B cell (primary cell): ENCODE measurements at regions of chr16 and their contacts with region 1.

Region 1: DNA sequence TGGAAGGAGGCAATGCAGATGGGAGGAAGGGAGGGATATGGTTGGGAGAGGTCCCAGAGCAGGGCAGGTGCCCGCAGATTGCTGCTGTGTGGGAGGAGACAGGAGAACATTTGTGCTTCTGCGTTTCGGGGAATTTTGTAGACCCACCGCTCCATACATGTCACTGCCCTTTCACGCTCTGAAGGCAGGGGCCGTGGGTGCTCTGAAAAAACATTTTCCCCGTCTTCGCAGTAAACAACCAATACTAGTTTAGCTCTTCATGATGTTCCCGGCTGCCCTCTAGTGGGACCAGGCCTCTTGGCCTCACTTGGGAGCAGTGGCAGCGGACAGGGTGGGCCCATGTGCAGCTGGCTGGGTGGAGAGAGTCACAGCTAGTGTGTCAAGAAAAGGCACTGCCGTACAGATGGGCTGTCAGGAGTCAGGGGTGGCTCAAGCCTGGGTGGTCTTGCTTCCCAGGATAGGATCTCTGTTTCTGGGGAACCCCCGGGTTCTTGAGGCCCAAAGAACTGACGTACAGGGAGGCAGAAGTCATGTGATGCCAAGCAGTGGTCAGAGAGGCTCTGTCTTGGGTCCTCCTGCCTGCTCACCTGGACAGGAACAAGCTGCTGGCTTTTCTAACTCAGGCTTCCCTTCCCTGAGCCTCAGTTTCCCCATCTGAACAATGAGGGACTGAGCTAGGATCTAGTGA is 46.5 kb upstream of the CPNE2 start:
- DNase-seq: peak; percentile 84
- ATAC-seq: peak; percentile 48
- H3K4me3 ChIP-seq: peak overlapping the region in 2 of 5 experiments; percentile 25 to 38
- H3K4me3 Mint-ChIP-seq: peak overlapping the region; percentile 78
- H3K27ac ChIP-seq: peak overlapping the region; percentile 65 to 72
- H3K27ac Mint-ChIP-seq: peak overlapping the region; percentile 98
- H3K4me1 ChIP-seq: peaks cover 51 to 69% of the 10 kb centered on the region in 2 donors
- H3K4me1 Mint-ChIP-seq: peaks cover 68% of the 10 kb centered on the region
- H3K27me3 ChIP-seq: no peaks in the 10 kb centered on the region
- H3K27me3 Mint-ChIP-seq: no peaks in the 10 kb centered on the region
- CTCF ChIP-seq: peak; percentile 67

Region 2: GRCh38 chr16:56938422-56939156 is 107.2 kb before region 1 on chr16:
- CTCF ChIA-PET with region 1: interaction called, 14 read pairs
- POLR2A ChIA-PET with region 1: interaction called, 4 read pairs
- intact Hi-C with region 1: no loop called
- DNase-seq: no peak
- ATAC-seq: peak; percentile 22
- H3K4me3 ChIP-seq: no peak overlapping the region
- H3K4me3 Mint-ChIP-seq: peak overlapping the region; percentile 80
- H3K27ac ChIP-seq: peak overlapping the region in 1 of 2 donors; percentile 24
- H3K27ac Mint-ChIP-seq: peak overlapping the region; percentile 78
- H3K4me1 ChIP-seq: peaks cover 74 to 82% of the 10 kb centered on the region in 2 donors
- H3K4me1 Mint-ChIP-seq: peaks cover 79% of the 10 kb centered on the region
- H3K27me3 ChIP-seq: no peaks in the 10 kb centered on the region
- H3K27me3 Mint-ChIP-seq: no peaks in the 10 kb centered on the region
- CTCF ChIP-seq: no peak

Region 3: DNA sequence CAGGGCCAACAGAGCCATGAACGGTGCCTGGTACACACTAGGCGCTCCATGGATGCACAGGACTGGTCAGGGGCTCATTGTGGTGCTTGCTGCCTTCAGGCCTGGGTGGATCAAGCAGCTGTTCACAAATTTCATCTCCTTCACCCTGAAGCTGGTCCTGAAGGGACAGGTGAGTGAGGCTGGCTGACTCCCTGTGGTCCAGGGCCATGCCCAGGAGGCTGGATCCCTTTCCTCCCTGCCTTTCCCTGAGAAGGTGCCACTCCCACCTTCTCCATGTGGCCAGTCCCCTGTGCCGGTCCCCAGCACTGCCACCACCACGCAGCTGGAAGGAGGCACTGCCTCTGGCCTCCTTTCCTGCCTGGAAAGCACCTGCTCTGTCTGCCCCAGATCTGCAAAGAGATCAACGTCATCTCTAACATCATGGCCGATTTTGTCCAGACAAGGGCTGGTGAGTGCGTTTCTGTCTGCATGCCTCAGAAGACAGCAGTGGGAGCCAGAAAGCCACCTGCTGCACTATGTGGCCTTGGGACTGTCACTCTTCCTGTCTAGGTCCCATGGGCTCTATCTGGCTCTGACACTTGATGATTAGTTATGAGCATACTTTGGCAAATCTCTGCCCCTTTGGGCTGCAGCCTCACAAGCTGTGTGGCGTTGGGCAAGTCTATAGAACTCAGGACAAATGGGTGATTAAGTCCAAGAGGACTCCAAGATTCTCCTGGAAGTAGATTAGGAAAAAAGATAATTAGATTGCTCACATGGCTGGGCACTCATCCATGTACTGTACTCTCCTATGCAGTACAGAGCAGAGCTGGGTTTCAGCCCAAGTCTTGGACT is 74.7 kb before region 1 on chr16:
- CTCF ChIA-PET with region 1: interaction called, 213 read pairs
- POLR2A ChIA-PET with region 1: interaction called, 24 read pairs
- intact Hi-C with region 1: loop called (anchors 1 kb)
- DNase-seq: peak; percentile 87
- ATAC-seq: peak; percentile 92
- H3K4me3 ChIP-seq: no peak overlapping the region
- H3K4me3 Mint-ChIP-seq: peak overlapping the region; percentile 82
- H3K27ac ChIP-seq: peak overlapping the region; percentile 39 to 57
- H3K27ac Mint-ChIP-seq: peak overlapping the region; percentile 97
- H3K4me1 ChIP-seq: peaks cover 55 to 62% of the 10 kb centered on the region in 2 donors
- H3K4me1 Mint-ChIP-seq: peaks cover 60% of the 10 kb centered on the region
- H3K27me3 ChIP-seq: no peaks in the 10 kb centered on the region
- H3K27me3 Mint-ChIP-seq: no peaks in the 10 kb centered on the region
- CTCF ChIP-seq: no peak

Region 4: GRCh38 chr16:57000271-57001025 is 45.4 kb before region 1 on chr16:
- CTCF ChIA-PET with region 1: interaction called, 14 read pairs
- POLR2A ChIA-PET with region 1: interaction called, 6 read pairs
- intact Hi-C with region 1: loop called (anchors 2 kb)
- DNase-seq: peak; percentile 41
- ATAC-seq: peak; percentile 73
- H3K4me3 ChIP-seq: no peak overlapping the region
- H3K4me3 Mint-ChIP-seq: peak overlapping the region; percentile 71
- H3K27ac ChIP-seq: peak overlapping the region; percentile 77 to 83
- H3K27ac Mint-ChIP-seq: peak overlapping the region; percentile 94
- H3K4me1 ChIP-seq: peaks cover 52 to 63% of the 10 kb centered on the region in 2 donors
- H3K4me1 Mint-ChIP-seq: peaks cover 88% of the 10 kb centered on the region
- H3K27me3 ChIP-seq: no peaks in the 10 kb centered on the region
- H3K27me3 Mint-ChIP-seq: no peaks in the 10 kb centered on the region
- CTCF ChIP-seq: no peak

Region 5: DNA sequence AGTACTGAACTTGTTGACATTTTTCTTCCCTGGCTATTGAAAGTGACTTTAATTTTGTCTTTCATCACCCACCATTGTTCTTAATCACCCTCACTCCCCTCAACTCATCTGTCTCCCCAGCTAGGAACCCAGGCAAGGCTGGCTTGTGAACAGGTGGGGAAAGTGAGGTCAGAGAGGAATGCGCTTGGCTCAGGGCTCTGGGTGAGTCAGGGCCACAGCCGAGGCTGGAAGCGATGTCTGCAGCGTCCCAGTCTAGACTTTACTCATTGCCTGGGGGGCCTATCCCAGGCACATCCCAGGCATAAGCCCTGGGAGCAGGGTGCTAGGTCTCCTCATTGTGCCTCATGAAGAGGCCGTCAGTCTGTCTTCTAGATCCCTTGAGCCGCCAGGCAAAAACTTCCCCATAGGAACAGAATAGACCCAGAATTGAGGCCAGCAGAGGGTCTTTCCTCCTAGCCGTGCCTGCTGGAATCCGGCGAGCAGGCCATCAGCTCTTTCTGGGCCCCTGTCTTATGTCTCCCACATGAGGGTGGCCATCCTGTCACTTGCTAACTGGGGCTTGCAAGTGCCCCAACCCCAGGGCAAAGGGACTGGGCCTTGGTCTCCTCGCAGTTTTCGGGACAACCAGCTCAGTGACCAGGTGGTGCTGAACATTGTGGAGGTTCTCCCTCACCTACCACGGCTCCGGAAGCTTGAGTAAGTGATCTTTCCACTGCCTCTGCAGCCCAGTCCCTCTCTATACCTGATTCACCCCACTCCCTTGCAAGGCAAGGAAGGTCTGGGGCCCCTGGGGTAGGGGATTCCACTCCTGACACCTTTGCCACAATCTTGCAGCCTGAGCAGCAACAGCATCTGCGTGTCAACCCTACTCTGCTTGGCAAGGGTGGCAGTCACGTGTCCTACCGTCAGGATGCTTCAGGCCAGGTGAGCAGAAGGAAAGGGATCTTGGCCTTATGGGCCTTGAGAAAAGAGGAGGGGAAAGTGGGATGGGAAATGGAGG is 16.4 kb before region 1 on chr16:
- CTCF ChIA-PET with region 1: interaction called, 12 read pairs
- POLR2A ChIA-PET with region 1: interaction called, 4 read pairs
- intact Hi-C with region 1: no loop called
- DNase-seq: no peak
- ATAC-seq: no peak
- H3K4me3 ChIP-seq: no peak overlapping the region
- H3K4me3 Mint-ChIP-seq: no peak overlapping the region
- H3K27ac ChIP-seq: no peak overlapping the region
- H3K27ac Mint-ChIP-seq: peak overlapping the region; percentile 32
- H3K4me1 ChIP-seq: peaks cover 0 to 39% of the 10 kb centered on the region in 2 donors
- H3K4me1 Mint-ChIP-seq: peaks cover 31% of the 10 kb centered on the region
- H3K27me3 ChIP-seq: no peaks in the 10 kb centered on the region
- H3K27me3 Mint-ChIP-seq: no peaks in the 10 kb centered on the region
- CTCF ChIP-seq: no peak